Psoas muscle (tissue), 8 donors: ENCODE measurements at regions of chr11 and their contacts with region 1.

Region 1: DNA sequence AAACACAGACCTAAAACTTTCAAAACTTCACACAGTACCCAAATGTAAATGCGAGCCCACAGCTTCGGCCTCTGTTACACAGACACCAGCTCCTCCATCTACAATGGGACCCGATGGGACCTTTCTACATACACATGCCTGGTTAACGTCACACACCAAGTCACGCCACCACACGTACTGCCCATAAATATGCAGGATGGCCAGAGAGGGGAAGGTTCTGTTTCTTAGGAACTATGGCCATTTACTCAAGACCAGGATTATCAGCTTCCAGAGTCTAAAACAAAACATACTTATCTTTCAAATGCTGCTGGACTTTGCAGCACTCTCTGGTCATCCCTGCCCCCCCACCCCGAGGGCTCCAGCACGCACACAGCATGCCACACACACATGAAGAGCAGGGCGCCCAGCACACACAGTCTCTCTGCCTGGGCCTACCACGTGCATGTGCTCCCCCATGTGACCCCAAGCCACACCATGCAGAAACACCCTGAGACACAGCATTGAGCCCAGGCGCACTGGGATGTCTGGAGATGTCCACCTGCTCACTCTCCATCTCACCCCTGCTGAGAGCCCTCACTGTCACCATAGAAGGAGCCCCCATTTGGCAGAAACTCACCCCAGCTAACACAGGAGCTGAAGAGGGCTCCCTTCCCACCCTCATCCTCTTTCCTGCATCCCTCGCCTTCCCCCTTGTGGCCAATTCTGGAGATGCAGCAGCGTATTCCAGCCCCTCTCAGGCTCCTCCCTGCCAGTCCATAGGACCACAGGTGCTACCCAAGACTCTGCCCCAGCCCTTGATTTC is 61.8 kb downstream of the SLC22A12 start:
- DNase-seq: peak; percentile 74 to 87
- ATAC-seq: peak; percentile 74 to 89 (median 82)
- H3K4me3 ChIP-seq: no peak overlapping the region
- H3K27ac ChIP-seq: no peak overlapping the region
- H3K4me1 ChIP-seq: no peaks in the 10 kb centered on the region
- H3K27me3 ChIP-seq: peaks cover 0 to 7% (median 4%) of the 10 kb centered on the region in 3 donors
- CTCF ChIP-seq: peak; percentile 80

Region 2: GRCh38 chr11:64448599-64449556 is 203.9 kb before region 1 on chr11:
- intact Hi-C with region 1: loop called in 1 of 2 experiments (anchors 2 kb)
- DNase-seq: peak; percentile 81 to 91
- ATAC-seq: peak; percentile 91 to 99 (median 94)
- H3K4me3 ChIP-seq: peak overlapping the region; percentile 57
- H3K27ac ChIP-seq: peak overlapping the region; percentile 65
- H3K4me1 ChIP-seq: peaks cover 17% of the 10 kb centered on the region
- H3K27me3 ChIP-seq: peaks cover 0 to 7% (median 0%) of the 10 kb centered on the region in 3 donors
- CTCF ChIP-seq: peak; percentile 78

Region 3: DNA sequence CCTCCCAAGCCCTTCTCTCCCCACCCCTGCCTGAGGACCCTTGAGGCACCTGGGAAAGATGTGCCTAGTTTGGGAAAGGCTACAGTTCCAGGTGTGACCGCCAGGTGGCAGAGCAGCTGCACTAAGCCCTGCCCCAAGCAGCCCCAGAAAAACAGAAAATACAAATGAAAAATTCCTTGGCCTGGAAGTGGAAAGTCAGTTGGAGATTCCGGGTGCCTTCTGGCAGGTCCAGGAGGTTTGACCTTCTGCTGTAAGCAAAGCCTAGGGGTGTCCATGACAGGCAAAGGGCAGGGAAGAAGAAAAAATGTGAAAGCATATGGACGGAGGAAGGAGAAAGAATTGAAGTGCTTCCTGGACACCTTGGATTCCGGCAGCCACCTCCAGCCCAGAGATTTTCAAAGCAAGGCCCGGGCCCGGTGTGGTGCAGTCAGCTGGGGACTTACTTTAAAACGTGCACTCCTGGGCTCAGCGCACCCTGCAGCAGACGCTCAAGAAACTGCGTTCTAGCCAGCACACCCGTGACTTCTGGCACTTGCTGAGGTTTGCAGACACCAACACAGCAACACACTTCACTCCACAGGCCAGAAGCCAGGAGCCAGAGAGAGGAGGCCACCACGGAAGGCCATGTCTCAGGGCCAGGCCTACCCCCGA is 99.1 kb before region 1 on chr11:
- intact Hi-C with region 1: loop called (anchors 1 to 5 kb)
- DNase-seq: peak; percentile 55 to 81
- ATAC-seq: peak; percentile 67 to 88 (median 76)
- H3K4me3 ChIP-seq: no peak overlapping the region
- H3K27ac ChIP-seq: no peak overlapping the region
- H3K4me1 ChIP-seq: peaks cover 7% of the 10 kb centered on the region
- H3K27me3 ChIP-seq: no peaks in the 10 kb centered on the region
- CTCF ChIP-seq: peak; percentile 99